ENCODE measurements at regions of chr12 and their contacts with region 1.

Region 1: GRCh38 chr12:93677195-93678064 is at the start of gene CRADD:
- DNase-seq: peak; percentile 72
- ATAC-seq: peak; percentile 94
- H3K4me3 Mint-ChIP-seq: peak within 1 kb of the TSS; percentile 99
- H3K27ac Mint-ChIP-seq: peak within 1 kb of the TSS; percentile 100
- H3K4me1 Mint-ChIP-seq: peaks cover 23% of the 10 kb centered on the region
- H3K27me3 Mint-ChIP-seq: peaks cover 12% of the 10 kb centered on the region
- CTCF ChIP-seq: no peak
- total RNA-seq, gene CRADD: 10.3 and 15.3 TPM in 2 replicates

Region 2: DNA sequence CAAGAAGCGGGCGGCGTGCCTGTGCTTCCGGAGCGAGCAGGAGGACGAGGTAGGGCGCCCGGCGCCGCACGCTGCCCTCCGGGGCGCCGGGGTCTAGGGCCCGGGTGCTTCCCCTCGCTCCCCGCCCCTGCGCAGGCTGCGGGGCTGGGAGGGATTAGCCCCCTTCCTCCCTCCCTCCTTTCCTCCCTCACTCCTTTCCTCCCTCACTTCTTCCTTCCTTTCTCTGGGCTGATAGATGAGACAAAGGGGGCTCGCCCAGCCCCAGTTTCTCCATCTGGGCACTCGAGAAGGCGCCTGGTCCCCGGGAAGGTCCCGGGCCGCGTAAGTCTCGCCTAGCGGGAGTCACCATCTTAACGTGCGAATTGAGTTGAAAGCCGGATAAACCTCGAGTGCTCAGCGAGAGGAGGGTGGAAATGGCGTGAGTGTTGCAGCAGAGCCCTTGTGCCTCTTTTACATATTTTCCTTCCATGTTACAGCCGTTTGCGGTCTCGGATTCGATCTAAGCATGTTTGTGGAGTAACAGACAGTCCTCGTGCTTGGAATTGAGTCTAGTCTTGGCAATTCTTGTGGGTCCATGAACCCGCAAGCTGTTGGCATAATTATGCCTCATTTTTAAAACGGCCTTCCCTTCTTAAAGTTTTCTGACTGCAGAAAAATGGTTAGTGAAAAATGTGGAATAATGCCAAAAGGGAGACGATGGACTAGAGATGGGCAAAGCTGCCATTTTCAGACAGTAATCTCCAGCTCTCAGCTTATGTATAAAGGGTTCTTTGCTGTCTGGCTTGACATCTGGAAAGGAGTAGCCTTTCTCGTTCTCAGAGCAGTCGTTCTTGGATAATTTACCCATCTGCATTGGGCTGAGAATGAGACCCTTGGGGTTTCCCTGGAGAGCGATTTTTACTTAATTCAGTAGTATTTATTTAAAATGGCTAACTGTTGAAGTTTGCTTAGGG is 298.8 kb before region 1 on chr12:
- CTCF ChIA-PET with region 1: no interaction called
- POLR2A ChIA-PET with region 1: no interaction called
- intact Hi-C with region 1: loop called (anchors 2 kb)
- DNase-seq: peak; percentile 57
- ATAC-seq: peak; percentile 40
- H3K4me3 Mint-ChIP-seq: peak overlapping the region; percentile 100
- H3K27ac Mint-ChIP-seq: peak overlapping the region; percentile 100
- H3K4me1 Mint-ChIP-seq: peaks cover 41% of the 10 kb centered on the region
- H3K27me3 Mint-ChIP-seq: no peaks in the 10 kb centered on the region
- CTCF ChIP-seq: no peak

Region 3: DNA sequence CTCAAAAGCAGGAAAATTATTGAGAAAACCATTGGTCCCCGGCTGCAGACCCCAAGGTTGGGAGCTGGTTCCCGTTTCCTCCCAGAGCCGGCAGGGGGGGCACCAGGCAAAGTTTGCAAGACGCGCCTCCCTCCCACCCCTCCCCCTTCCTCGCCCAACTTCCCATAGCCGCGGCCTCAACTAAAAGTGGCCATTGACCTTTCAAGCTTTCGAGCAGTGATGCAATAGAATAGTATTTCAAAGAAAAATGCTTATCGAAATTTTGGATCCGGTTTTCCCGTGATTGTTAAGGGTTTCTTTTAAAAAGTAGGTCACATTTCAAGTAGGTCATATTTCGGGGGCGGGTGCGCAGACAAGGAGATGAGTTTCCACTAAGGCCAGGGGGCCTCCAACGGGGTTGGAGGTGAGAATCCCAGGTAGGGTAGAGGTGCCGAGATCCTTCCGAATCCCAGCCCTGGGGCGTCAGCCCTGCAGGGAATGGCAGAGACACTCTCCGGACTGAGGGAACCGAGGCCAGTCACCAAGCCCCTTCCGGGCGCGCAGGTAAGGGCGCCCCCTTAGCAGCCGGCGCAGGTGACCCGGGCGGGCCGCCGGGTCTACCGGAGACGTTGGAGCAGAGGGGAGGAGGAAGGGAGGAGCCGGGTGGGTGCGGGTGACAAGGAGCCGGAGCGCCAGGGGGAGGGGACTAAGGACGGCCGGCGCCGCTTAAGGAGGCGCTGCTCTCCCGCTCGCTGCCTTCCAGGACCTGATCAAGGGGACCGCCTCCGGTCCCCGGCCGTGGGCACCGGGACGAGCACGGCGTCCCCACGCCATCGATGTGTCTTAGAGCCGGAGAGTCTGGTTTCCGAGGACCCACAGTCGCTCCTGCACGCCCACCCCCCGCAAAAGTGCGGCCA is 107.5 kb before region 1 on chr12:
- CTCF ChIA-PET with region 1: interaction called, 3 read pairs
- POLR2A ChIA-PET with region 1: interaction called, 8 read pairs
- intact Hi-C with region 1: loop called (anchors 1 kb)
- DNase-seq: peak; percentile 60
- ATAC-seq: peak; percentile 42
- H3K4me3 Mint-ChIP-seq: peak overlapping the region; percentile 88
- H3K27ac Mint-ChIP-seq: no peak overlapping the region
- H3K4me1 Mint-ChIP-seq: peaks cover 17% of the 10 kb centered on the region
- H3K27me3 Mint-ChIP-seq: peaks cover 26% of the 10 kb centered on the region
- CTCF ChIP-seq: no peak

Region 4: GRCh38 chr12:93616584-93617101 is 60.8 kb before region 1 on chr12:
- CTCF ChIA-PET with region 1: no interaction called
- POLR2A ChIA-PET with region 1: no interaction called
- intact Hi-C with region 1: no loop called
- DNase-seq: no peak
- ATAC-seq: no peak
- H3K4me3 Mint-ChIP-seq: no peak overlapping the region
- H3K27ac Mint-ChIP-seq: no peak overlapping the region
- H3K4me1 Mint-ChIP-seq: no peaks in the 10 kb centered on the region
- H3K27me3 Mint-ChIP-seq: peaks cover 6% of the 10 kb centered on the region
- CTCF ChIP-seq: no peak

Region 5: DNA sequence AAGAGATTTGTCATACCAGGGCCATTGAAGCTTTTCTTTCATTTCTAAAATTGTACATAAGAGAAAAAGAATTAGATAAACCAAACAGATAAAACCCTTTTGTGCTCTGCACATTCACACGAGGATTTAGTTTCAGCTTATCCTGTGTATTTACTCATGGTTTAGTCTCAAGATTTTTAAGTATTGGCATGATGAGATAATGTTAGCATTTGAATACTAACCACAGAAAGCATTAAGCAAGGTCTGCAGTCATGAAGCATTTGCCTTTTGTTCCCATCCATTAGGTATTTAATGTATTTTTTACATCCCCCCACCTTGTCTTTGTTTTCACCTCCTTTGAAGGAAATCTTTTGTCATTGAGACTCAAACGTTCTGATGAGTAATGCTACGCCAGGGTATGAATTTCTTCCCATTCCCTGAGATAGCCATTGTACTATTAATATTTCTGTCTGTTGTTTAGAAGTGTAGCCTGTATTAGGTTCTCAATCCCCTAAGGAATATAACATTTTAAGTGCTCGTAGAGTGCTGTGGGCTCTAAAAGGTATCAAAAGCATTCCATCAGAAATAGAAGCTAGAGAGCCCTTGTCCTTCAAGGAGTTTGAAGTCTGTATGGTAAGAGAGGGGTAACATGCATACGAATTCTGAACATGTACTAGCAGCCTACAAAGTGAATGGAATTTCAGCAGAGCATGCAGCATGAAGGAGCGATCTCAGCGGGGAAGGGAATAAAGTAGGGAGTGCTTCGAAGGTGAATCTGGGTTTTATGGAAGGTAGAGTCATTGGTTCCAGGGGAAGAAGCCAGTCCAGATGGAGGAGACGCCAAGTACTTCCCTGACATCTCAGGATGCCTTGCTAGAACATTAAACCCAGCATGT is 22.1 kb after region 1 on chr12:
- CTCF ChIA-PET with region 1: no interaction called
- POLR2A ChIA-PET with region 1: interaction called, 13 read pairs
- intact Hi-C with region 1: no loop called
- DNase-seq: no peak
- ATAC-seq: no peak
- H3K4me3 Mint-ChIP-seq: no peak overlapping the region
- H3K27ac Mint-ChIP-seq: no peak overlapping the region
- H3K4me1 Mint-ChIP-seq: peaks cover 4% of the 10 kb centered on the region
- H3K27me3 Mint-ChIP-seq: no peaks in the 10 kb centered on the region
- CTCF ChIP-seq: no peak

Region 6: GRCh38 chr12:94101738-94102660 is 424.6 kb after region 1 on chr12:
- CTCF ChIA-PET with region 1: interaction called, 7 read pairs
- POLR2A ChIA-PET with region 1: interaction called, 7 read pairs
- intact Hi-C with region 1: loop called (anchors 2 kb)
- DNase-seq: peak; percentile 64
- ATAC-seq: peak; percentile 87
- H3K4me3 Mint-ChIP-seq: peak overlapping the region; percentile 83
- H3K27ac Mint-ChIP-seq: no peak overlapping the region
- H3K4me1 Mint-ChIP-seq: peaks cover 6% of the 10 kb centered on the region
- H3K27me3 Mint-ChIP-seq: peaks cover 54% of the 10 kb centered on the region
- CTCF ChIP-seq: peak; percentile 34

Region 7: GRCh38 chr12:94459728-94460615 is 782.5 kb after region 1 on chr12 and contains the start of gene CEP83:
- CTCF ChIA-PET with region 1: no interaction called
- POLR2A ChIA-PET with region 1: no interaction called
- intact Hi-C with region 1: loop called (anchors 1 kb)
- DNase-seq: peak; percentile 94
- ATAC-seq: peak; percentile 96
- H3K4me3 Mint-ChIP-seq: peak within 1 kb of the TSS; percentile 91
- H3K27ac Mint-ChIP-seq: peak within 1 kb of the TSS; percentile 88
- H3K4me1 Mint-ChIP-seq: peaks cover 23% of the 10 kb centered on the region
- H3K27me3 Mint-ChIP-seq: no peaks in the 10 kb centered on the region
- CTCF ChIP-seq: no peak
- total RNA-seq, gene CEP83: 25.0 and 36.9 TPM in 2 replicates

Region 8: GRCh38 chr12:95473884-95474659 is 1796.6 kb after region 1 on chr12 and contains the start of gene METAP2:
- CTCF ChIA-PET with region 1: no interaction called
- POLR2A ChIA-PET with region 1: interaction called, 4 read pairs
- intact Hi-C with region 1: loop called (anchors 5 kb)
- DNase-seq: peak; percentile 87
- ATAC-seq: peak; percentile 97
- H3K4me3 Mint-ChIP-seq: peak within 1 kb of the TSS; percentile 100
- H3K27ac Mint-ChIP-seq: peak within 1 kb of the TSS; percentile 99
- H3K4me1 Mint-ChIP-seq: peaks cover 51% of the 10 kb centered on the region
- H3K27me3 Mint-ChIP-seq: peaks cover 2% of the 10 kb centered on the region
- CTCF ChIP-seq: no peak
- total RNA-seq, gene METAP2: 63.0 and 67.4 TPM in 2 replicates

Measured in activated B cell treated with CpG ODN at 0.5 μM for 24 hours (primary cell).